ENCODE measurements at regions of chr7 and their contacts with region 1.

Region 1: DNA sequence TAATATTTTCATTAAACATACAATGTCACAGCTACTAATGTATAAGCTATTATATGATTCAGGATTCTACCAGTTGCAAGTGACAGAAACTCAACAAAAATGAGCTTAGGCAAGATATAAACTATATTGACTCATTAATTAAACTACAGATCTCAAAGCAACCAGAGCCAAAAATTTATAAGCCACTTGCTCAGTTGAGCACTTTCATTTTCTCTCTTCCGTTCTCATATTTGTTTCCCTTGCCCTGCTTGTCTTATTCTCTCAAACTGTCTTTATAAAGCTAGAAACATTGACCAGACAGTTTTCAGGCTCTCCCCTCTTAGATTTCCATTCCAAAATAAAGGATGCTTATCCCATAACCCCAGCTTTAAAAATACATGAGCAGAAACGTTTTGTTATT is 60.2 kb upstream of the DGKB start:
- DNase-seq: no peak
- H3K4me3 Mint-ChIP-seq: no peak overlapping the region
- H3K27ac Mint-ChIP-seq: no peak overlapping the region
- H3K4me1 Mint-ChIP-seq: no peaks in the 10 kb centered on the region
- H3K27me3 Mint-ChIP-seq: no peaks in the 10 kb centered on the region

Region 2: GRCh38 chr7:14377646-14378266 is 585.0 kb before region 1 on chr7:
- intact Hi-C with region 1: no loop called
- DNase-seq: no peak
- H3K4me3 Mint-ChIP-seq: no peak overlapping the region
- H3K27ac Mint-ChIP-seq: no peak overlapping the region
- H3K4me1 Mint-ChIP-seq: no peaks in the 10 kb centered on the region
- H3K27me3 Mint-ChIP-seq: no peaks in the 10 kb centered on the region

Region 3: DNA sequence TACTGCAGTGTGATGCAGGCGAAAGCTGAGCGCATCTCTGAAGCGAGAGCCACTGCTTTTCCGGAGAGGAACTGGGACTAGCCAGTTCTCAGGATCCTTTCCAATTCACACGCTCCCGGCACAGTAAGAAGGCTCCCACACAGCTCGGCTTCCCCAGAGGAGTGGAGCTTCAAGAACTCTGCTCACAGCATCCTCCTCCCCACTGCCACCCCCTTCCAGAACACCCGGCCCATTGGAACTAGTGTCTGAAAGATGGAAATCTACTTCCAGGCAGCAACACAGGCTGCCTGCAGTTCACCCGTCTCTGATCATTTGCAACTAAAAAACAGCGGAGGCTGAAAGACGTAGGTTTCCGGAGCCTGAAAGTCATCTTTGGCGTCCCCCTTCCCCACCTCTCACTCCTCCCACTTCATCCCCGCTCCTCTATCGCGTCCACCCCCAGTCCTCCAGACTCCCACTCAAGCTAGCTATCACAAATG is 60.1 kb before region 1 on chr7 and contains the start of gene DGKB:
- intact Hi-C with region 1: loop called (anchors 10 kb)
- DNase-seq: no peak
- H3K4me3 Mint-ChIP-seq: no peak within 1 kb of the TSS
- H3K27ac Mint-ChIP-seq: no peak within 1 kb of the TSS
- H3K4me1 Mint-ChIP-seq: no peaks in the 10 kb centered on the region
- H3K27me3 Mint-ChIP-seq: no peaks in the 10 kb centered on the region
- total RNA-seq, gene DGKB: not detected in 2 replicates

Region 4: GRCh38 chr7:14999331-14999730 is 36.6 kb after region 1 on chr7:
- intact Hi-C with region 1: no loop called
- DNase-seq: no peak
- H3K4me3 Mint-ChIP-seq: no peak overlapping the region
- H3K27ac Mint-ChIP-seq: no peak overlapping the region
- H3K4me1 Mint-ChIP-seq: no peaks in the 10 kb centered on the region
- H3K27me3 Mint-ChIP-seq: no peaks in the 10 kb centered on the region

Region 5: DNA sequence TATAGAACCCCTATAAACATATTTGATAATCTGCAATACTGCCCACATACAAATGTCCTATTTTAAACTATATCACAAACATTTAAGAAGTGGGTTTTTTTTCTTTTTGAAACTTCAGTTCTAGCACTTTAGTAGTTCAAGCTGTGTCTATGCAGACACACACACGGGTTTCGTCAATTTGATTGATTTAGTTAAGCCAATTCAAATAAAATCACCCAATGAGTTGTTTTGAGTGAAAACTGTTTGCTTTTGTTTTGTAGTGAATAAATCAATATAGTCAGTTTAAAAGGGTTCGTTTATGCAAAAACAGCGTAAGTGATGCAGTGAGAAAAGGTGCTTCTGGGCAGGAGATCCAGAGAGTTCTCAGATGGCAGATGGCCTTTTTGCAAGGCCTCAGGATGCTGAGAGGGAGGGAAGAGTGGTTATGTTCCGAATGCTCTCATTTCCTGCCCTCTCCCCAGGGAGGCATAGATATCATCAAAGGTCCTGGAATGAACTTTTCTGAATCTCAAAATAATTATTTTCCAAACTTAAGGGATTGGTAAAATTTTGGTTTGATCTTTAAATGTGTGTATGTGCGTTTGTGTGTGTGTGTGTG is 496.3 kb after region 1 on chr7:
- intact Hi-C with region 1: no loop called
- DNase-seq: no peak
- H3K4me3 Mint-ChIP-seq: no peak overlapping the region
- H3K27ac Mint-ChIP-seq: no peak overlapping the region
- H3K4me1 Mint-ChIP-seq: no peaks in the 10 kb centered on the region
- H3K27me3 Mint-ChIP-seq: no peaks in the 10 kb centered on the region

Region 6: DNA sequence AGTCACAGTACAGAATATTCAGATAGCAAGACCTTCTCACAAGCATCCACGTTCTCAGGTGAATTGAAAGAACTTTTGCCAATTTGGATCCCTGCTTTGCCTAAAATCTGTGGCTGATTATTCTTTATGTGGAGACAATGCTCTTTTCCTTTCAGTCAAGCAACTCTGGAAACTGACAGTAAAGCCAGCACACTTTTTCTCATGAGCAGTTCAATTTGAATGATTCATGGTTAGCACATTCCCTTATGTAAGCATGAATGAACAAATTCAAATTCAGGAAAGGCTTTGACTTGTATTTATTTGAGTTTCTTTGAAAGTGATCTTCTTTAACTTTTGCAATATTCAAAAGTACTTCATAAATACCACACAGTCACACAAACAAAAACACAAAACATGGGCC is 666.1 kb after region 1 on chr7:
- intact Hi-C with region 1: no loop called
- DNase-seq: no peak
- H3K4me3 Mint-ChIP-seq: no peak overlapping the region
- H3K27ac Mint-ChIP-seq: no peak overlapping the region
- H3K4me1 Mint-ChIP-seq: no peaks in the 10 kb centered on the region
- H3K27me3 Mint-ChIP-seq: no peaks in the 10 kb centered on the region

Measured in activated CD4-positive, alpha-beta T cell treated with anti-CD3 and anti-CD28 coated beads, Interleukin-2, amount 10 ng/mL, durations not matched to agents 24 days and 14 days (primary cell).